ENCODE measurements at regions of chr7 and their contacts with region 1.

Region 1: GRCh38 chr7:94295850-94296249 is 98.8 kb upstream of the COL1A2 start:
- DNase-seq: no peak
- ATAC-seq: peak; percentile 67 to 82

Region 2: GRCh38 chr7:94190599-94191061 is 105.2 kb before region 1 on chr7:
- intact Hi-C with region 1: no loop called
- DNase-seq: peak; percentile 17
- ATAC-seq: peak in 1 of 2 donors; percentile 54

Region 3: GRCh38 chr7:94395141-94396036 is 99.5 kb after region 1 on chr7:
- intact Hi-C with region 1: loop called (anchors 2 to 10 kb)
- DNase-seq: peak; percentile 28
- ATAC-seq: peak; percentile 73 to 80

Region 4: GRCh38 chr7:95246831-95247370 is 951.1 kb after region 1 on chr7:
- intact Hi-C with region 1: loop called in 1 of 2 experiments (anchors 5 kb)
- DNase-seq: no peak
- ATAC-seq: peak; percentile 84 to 87

Measured in left cardiac atrium (tissue), 4 donors.